ENCODE measurements at regions of chr1 and their contacts with region 1.

Region 1: DNA sequence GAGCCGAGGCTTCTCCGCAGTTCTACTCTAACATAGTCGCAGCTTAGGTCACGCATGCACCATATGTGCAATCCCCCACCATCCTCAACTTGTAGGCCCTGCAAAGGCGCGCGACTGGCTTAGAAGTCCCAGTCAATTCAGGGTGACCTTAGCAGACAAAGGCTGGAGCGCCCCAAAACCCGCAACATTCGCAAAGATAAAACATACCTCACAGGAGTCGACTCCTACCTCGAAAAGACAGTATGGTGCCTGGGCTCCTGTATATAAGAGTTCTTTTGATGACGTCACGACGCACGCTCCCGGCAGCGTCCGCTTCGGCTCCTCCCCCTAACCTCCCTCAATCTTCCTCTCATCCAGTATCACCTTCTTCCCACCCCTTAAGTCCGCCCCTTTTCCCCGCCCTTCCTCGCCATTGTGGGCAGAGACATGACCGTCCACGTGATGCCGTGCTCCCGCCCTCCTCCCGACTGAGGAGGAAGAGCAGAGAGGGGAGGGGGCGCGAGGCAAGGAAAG is at the start of gene GAS5:
- DNase-seq: peak; percentile 91 to 99 (median 98)
- H3K4me3 ChIP-seq: peak within 1 kb of the TSS; percentile 64 to 99 (median 91)
- H3K27ac ChIP-seq: peak within 1 kb of the TSS; percentile 83 to 99 (median 97)
- H3K27me3 ChIP-seq: no peaks in the 10 kb centered on the region
- CTCF ChIP-seq: peak in 9 of 56 donors; percentile 1 to 33 (median 22)
- total RNA-seq, gene GAS5: 88.6 to 204 (median 118) TPM

Region 2: DNA sequence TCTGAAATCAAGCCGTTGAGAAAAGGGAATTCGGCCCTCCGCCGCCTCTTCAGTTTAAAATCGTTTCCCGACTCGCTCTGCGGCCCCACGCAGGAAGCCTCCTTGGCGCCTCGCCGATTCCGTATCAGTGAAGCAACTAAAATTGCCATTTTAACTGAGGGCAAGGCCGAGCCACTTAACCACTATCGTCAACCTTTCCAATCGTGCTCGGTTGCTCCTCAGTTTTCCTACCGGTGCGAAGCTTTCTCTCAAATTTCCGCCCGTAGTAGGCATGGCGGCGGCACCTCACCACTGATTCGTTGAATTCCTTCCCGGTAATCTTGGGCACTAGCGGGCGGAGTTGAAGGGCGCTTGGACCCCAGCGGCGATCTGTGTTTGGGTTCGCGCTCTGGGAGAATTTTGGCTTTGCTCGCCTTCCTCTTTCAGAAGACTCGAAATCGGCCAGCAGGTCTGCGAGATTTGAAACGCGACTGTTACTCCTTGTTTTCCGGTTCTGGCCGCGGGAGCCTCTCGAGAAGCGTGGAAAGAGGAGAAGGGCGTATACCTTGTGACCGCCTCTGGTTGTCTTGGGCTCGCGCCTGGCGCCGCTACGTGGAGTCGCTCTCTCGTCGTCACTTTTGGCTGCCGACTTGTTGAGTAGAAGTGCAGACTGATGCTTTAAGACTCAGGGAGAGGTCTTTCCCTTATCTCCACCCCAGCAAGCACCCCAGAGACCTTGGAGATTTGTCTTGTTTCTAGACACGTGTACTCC is 43.3 kb before region 1 on chr1 and contains the starts of genes CENPL and DARS2:
- intact Hi-C with region 1: loop called (anchors 1 to 2 kb)
- DNase-seq: peak; percentile 85 to 97 (median 95)
- H3K4me3 ChIP-seq: peak within 1 kb of the TSS; percentile 61 to 98 (median 86)
- H3K27ac ChIP-seq: peak within 1 kb of the TSS; percentile 1 to 96 (median 89)
- H3K27me3 ChIP-seq: no peaks in the 10 kb centered on the region
- CTCF ChIP-seq: peak in 38 of 56 donors; percentile 5 to 53 (median 34)
- total RNA-seq, gene CENPL: 2.4 to 10.9 (median 5.3) TPM
- total RNA-seq, gene DARS2: 7.0 to 13.9 (median 9.8) TPM

Region 3: DNA sequence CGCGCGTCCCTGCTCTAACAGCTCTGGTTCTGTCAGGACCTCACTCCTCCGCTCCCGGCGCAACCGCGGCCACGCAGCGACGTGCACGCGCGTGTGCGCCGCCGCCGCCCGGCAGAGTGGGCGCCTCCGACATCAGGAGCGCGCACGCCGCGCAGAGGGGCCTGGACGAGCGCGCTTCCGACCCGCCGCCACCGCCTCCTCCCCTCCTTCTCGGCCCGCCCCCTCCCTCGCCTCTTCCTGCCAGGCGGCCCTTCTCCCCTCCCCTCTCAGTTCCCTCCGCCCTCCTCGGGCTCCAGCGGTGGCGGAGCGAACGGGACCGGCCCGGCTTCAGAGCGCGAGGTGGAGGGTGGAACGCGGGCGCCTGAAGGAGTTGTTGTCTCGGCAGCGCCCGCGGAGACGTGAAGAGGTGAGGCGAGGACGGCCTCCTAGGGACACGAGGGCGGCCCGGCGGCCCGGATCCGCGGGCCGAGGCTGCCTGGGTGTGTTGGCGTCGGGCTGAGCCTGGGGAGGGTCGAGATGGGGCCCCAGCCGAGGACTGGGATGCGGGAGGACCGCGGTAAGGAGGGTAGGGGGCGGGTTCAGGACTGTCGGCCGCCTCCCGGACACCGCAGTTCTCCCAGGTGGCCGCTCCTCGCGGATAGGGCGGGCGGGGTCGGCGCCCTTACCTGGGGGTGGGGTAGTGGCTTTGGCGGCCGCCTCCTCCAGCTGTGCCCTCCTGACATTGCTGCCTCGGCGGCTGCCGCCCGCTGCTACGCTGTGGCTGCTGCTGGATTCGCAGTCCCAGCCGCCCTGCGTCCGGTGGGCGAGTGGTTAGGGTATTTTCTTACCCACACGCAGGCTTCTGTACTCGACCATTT is 291.7 kb after region 1 on chr1 and contains the start of gene RABGAP1L:
- intact Hi-C with region 1: loop called (anchors 2 to 5 kb)
- DNase-seq: peak; percentile 75 to 93 (median 89)
- H3K4me3 ChIP-seq: peak within 1 kb of the TSS; percentile 73 to 100 (median 95)
- H3K27ac ChIP-seq: peak within 1 kb of the TSS in 58 of 59 donors; percentile 27 to 97 (median 88)
- H3K27me3 ChIP-seq: no peaks in the 10 kb centered on the region
- CTCF ChIP-seq: peak in 42 of 56 donors; percentile 4 to 63 (median 26)
- total RNA-seq, gene RABGAP1L: 48.6 to 148 (median 111) TPM

Measured in dorsolateral prefrontal cortex (tissue), 120 donors.